ENCODE measurements at regions of chr1 and their contacts with region 1.

Region 1: GRCh38 chr1:233815865-233816264 is 88.6 kb upstream of the SLC35F3 start:
- DNase-seq: no peak
- H3K4me3 ChIP-seq: no peak overlapping the region
- CTCF ChIP-seq: no peak

Region 2: GRCh38 chr1:233707153-233707879 is 108.5 kb before region 1 on chr1:
- in situ Hi-C with region 1: no loop called
- DNase-seq: no peak
- H3K4me3 ChIP-seq: no peak overlapping the region
- CTCF ChIP-seq: no peak

Region 3: DNA sequence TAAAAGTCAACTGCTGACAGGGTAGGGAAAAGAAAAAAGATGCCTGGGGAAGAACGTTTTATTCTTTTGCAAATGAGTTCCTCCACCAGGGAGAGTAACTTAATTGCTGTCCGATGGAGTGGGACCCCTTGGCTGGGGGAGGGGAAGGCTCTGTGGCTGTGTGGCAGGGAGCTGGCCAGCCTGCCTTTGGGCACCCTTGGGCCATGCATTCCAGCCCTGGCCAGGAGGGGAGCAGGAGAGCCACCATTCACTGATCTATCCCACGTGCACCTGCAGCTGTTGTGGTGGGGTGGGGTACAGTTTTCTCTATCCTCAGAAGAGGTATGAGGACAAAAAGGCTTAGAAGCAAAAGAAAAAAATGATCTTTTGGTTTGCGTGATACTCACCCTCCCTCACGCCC is 85.1 kb before region 1 on chr1:
- in situ Hi-C with region 1: loop called (anchors 5 kb)
- DNase-seq: no peak
- H3K4me3 ChIP-seq: no peak overlapping the region
- CTCF ChIP-seq: no peak

Region 4: GRCh38 chr1:233759605-233760004 is 56.3 kb before region 1 on chr1:
- in situ Hi-C with region 1: no loop called
- DNase-seq: no peak
- H3K4me3 ChIP-seq: no peak overlapping the region
- CTCF ChIP-seq: no peak

Measured in astrocyte of the cerebellum (primary cell).